OCI-LY7 (cell line): ENCODE measurements at regions of chr21 and their contacts with region 1.

Region 1: GRCh38 chr21:39183237-39184007 is at the start of gene PSMG1:
- DNase-seq: peak; percentile 95
- H3K4me3 ChIP-seq: peak within 1 kb of the TSS; percentile 96
- H3K27ac ChIP-seq: peak within 1 kb of the TSS; percentile 62
- H3K4me1 ChIP-seq: peaks cover 35% of the 10 kb centered on the region
- CTCF ChIP-seq: no peak
- total RNA-seq, gene PSMG1: 76.9 and 87.2 TPM in 2 replicates

Region 2: DNA sequence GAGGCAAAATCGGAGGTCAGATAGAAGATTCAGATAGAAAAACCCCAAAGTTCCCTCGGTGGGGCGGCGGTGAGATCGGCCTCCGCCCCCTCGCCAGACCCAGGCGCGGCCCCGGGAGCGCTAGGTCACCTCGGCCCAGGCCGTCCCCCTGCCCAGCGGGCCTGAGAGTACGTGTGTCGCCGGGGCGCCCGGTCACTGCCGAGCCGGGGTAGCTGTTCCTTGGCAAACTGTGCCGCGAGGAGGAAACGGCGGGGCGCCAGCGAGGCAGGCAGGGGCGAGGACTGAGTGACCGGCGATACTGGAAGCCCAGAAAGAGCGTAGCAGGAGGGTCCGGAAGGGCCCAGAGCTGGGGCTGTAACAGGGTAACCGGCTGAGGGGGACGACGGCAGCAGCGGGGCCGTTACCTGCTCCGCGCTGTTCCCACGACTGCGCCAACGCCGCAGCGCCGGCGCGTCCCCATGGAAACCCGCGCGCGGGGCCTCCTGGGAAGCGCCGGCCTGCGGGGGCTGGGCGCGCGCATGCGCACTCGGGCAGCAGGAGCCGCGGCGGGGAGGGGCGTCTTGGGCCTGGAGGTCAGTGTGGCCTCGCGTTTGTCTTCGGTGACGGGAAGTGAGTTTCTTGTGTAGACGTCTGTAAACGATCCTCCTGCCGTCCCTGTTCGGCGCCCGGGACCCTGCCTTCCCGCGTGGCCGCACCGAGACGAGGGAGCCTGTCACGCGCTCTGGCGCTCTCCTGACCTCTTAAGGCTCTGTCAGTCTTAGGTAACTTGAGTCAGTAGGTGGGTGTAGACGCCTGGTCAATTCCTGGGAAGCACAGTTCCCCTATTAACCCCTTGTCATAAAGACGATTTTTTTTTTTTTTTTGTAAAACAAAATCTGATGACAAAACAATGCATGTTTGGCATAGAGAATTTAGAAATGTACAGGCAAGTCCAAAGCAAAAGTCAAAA is 262.2 kb after region 1 on chr21 and contains the start of gene LCA5L:
- CTCF ChIA-PET with region 1: no interaction called
- POLR2A ChIA-PET with region 1: interaction called, 4 read pairs
- intact Hi-C with region 1: loop called (anchors 2 kb)
- DNase-seq: peak; percentile 93
- H3K4me3 ChIP-seq: peak within 1 kb of the TSS; percentile 74
- H3K27ac ChIP-seq: peak within 1 kb of the TSS; percentile 9
- H3K4me1 ChIP-seq: peaks cover 14% of the 10 kb centered on the region
- CTCF ChIP-seq: 0 out of 2 replicates have a peak, but pooled peaks have one; percentile 13
- total RNA-seq, gene LCA5L: 0.35 TPM in 1 of 2 replicates, not detected in the other